A549 (cell line): ENCODE measurements at regions of chr17 and their contacts with region 1.

Region 1: DNA sequence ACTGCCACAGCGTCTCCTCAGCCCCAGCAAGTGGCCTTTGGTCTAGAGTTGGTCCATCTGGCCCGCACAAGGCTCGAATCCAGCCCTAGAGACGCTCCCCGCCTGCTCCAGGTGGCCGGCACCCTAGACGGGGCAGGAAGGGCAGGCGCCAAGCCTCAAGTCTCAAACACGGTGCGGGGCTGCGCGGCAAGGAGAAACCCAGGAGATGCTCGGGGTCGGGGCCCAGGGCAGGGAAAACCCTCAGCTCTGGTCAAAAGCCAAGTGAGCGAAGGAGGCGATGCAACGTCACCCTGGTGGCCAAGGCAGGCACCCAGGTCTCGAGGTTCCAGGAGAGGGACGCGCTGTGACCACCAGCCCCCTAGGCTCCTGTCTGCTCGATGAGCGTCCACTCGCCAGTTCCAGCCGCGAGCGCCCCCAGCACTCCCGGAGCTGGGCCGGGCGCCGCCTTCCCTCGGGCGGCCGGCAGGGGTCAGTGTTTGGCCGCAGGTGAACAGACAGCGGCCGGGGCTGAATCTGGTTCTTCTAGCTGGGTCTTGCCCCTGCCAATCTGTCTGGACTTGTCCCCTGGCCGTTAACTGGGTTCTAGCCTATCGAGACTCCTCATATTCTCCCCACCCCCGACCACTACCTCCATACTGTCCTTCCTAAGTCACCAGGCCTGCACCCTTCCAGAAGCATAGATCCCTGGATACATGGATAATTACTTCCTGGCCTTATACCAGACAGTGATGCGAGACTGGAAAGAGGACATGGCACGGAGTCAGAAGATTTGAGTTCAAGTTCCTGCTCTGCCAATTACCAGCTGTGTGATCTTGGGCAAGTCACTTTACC is 44.0 kb downstream of the PRAC1 start:
- DNase-seq: peak; percentile 74 to 86
- ATAC-seq: peak; percentile 96 to 98
- H3K4me3 ChIP-seq: peak overlapping the region; percentile 3; the same call in 1 of the 3 replicates
- H3K27ac ChIP-seq: peak overlapping the region; percentile 28 to 78
- H3K4me1 ChIP-seq: peaks cover 8% of the 10 kb centered on the region; the same call in 1 of the 3 replicates
- CTCF ChIP-seq: peak; percentile 99
- EP300 ChIP-seq: no peak
- POLR2A ChIP-seq: no peak
- RAD21 ChIP-seq: peak; percentile 91 to 97

Region 2: GRCh38 chr17:48478224-48479013 is 199.9 kb before region 1 on chr17:
- CTCF ChIA-PET with region 1: no interaction called
- POLR2A ChIA-PET with region 1: no interaction called
- DNase-seq: no peak
- ATAC-seq: peak; percentile 54 to 66; a peak in 4 of 6 replicates
- H3K4me3 ChIP-seq: no peak overlapping the region
- H3K27ac ChIP-seq: no peak overlapping the region
- H3K4me1 ChIP-seq: peaks cover 4% of the 10 kb centered on the region
- CTCF ChIP-seq: no peak
- EP300 ChIP-seq: no peak
- POLR2A ChIP-seq: no peak
- RAD21 ChIP-seq: no peak

Region 3: DNA sequence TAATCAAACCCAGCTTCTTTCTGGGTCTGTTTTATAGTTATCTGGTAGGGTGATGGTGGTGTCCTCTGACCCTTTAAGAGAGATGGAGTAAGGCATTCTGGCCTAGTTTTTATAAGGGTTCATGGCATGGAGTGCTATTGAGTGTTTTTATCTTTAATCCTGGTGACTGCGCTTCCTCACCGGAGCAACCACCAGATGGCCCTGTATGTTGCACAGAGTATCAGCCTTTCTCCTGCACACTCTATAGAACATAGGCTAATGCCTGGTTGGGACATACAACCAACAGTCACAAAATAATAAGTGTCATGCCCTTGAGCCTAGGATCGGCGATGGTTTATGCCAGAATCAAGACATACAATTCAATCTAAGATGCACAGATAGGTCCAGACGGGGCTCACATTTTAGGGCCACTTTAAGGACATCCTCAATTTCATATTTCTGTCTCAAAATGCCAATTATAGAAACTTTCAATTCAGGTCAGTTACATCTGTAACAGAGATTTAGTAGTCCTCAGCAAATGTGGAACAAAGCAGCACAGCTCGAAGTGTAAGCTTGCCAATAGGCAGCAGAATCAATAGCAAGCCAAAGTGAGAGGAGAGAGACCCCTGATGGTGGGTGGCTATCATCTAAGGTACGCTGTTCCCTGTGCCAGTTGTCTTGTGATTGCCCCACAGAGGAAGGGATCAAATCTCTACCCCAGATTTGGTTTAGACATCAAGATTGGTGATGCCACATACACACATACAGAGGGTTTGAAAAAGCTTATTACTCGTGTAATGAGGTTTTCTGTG is 15.0 kb before region 1 on chr17:
- CTCF ChIA-PET with region 1: interaction called, 121 read pairs
- POLR2A ChIA-PET with region 1: interaction called, 3 read pairs
- DNase-seq: no peak
- ATAC-seq: peak; percentile 73 to 83
- H3K4me3 ChIP-seq: no peak overlapping the region
- H3K27ac ChIP-seq: no peak overlapping the region
- H3K4me1 ChIP-seq: no peaks in the 10 kb centered on the region
- CTCF ChIP-seq: no peak
- EP300 ChIP-seq: no peak
- POLR2A ChIP-seq: no peak
- RAD21 ChIP-seq: 0 out of 5 replicates have a peak, but pooled peaks of 1 of the 2 experiments have one; percentile 11

Region 4: DNA sequence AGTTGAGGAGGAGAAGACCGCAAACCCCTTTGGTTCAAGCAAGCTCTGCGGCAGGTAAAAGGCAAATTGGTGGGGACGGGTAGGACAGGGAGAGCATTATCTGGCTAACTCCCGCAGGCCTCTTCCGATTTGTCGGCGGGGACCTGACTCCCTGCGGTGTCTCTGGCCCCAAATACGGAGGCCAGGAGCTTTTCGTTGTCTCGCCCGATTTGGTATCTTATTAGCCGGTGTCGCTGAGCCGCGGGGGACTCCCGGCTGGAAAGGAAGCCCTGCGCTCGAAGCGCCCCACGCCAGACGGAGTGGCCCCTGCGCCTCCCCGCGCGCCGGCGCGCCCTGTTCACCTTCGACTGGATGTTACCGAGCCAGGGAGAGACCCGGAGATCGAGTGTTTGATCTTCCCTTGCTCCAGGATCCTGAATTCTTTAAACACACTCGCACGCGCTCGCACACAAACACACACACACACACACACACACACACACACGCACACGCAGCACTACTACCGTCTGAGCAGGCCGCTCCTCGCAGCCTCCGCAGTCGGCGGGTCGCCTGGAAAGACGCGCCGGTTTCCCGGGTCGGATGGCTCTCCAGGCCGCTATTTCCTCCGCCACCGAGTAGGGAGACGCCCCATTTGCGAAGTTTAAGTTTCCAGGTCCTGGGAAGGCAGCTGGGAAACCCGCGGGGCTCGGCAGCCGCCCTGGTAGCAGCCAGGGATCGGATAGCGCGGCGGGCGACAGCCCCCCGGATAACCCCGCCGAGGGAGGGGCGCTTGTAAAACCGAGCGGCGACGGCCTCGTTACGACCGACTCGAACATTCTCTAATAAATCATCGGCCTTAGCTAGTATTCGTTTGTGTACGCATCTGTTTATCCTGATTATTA is 40.6 kb after region 1 on chr17:
- CTCF ChIA-PET with region 1: interaction called, 204 read pairs
- POLR2A ChIA-PET with region 1: interaction called, 3 read pairs
- DNase-seq: no peak
- ATAC-seq: no peak
- H3K4me3 ChIP-seq: no peak overlapping the region
- H3K27ac ChIP-seq: no peak overlapping the region
- H3K4me1 ChIP-seq: peaks cover 10% of the 10 kb centered on the region; the same call in 2 of the 3 replicates
- CTCF ChIP-seq: no peak
- EP300 ChIP-seq: no peak
- POLR2A ChIP-seq: no peak
- RAD21 ChIP-seq: no peak

Region 5: DNA sequence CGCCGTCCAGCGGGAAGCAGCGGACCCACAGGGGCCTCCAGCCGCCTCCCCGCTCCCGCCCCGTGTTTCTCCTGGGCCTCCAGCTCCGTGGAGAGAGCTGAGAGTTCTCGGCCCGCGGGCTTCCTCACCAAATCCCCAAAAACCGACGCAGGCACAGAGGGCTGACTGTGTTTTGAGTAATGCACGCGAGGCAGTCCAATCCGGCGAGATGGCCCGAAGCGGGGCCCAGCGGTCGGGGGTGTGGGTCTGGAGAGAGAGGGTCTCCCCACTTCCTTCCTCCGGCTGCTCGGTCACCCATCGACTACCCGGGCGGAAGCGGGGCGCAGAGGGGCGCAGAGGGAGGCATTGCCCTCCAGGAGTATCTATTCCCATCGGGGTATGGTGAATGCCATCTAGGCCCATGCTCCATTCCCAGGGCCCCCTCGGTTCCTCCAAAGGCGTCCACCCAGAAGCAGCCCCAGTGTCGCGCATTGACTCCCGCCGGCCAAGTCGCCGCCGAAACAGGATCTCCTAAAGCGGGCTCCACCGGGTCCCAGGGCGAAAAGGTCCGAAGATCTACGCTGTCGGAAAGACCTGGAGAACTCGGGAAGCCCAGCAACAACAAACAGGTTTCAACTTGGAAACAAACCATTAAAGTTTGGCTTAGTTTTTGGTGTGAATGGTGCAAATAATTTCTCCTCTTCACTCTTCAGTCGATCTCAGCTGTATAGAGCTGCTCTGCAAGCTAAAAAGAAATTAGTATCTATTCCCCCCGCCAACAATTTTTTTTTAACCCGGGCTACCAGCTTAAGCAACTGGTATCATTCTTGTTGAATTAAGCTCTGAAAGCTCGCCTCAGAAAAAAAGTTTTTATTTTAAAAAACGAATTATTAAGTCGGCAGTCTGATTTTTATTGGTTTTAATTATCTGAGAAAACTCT is 69.3 kb after region 1 on chr17:
- CTCF ChIA-PET with region 1: interaction called, 13 read pairs
- POLR2A ChIA-PET with region 1: no interaction called
- DNase-seq: no peak
- ATAC-seq: no peak
- H3K4me3 ChIP-seq: no peak overlapping the region
- H3K27ac ChIP-seq: no peak overlapping the region
- H3K4me1 ChIP-seq: peaks cover 17% of the 10 kb centered on the region; the same call in 2 of the 3 replicates
- CTCF ChIP-seq: no peak
- EP300 ChIP-seq: no peak
- POLR2A ChIP-seq: no peak
- RAD21 ChIP-seq: no peak

Region 6: DNA sequence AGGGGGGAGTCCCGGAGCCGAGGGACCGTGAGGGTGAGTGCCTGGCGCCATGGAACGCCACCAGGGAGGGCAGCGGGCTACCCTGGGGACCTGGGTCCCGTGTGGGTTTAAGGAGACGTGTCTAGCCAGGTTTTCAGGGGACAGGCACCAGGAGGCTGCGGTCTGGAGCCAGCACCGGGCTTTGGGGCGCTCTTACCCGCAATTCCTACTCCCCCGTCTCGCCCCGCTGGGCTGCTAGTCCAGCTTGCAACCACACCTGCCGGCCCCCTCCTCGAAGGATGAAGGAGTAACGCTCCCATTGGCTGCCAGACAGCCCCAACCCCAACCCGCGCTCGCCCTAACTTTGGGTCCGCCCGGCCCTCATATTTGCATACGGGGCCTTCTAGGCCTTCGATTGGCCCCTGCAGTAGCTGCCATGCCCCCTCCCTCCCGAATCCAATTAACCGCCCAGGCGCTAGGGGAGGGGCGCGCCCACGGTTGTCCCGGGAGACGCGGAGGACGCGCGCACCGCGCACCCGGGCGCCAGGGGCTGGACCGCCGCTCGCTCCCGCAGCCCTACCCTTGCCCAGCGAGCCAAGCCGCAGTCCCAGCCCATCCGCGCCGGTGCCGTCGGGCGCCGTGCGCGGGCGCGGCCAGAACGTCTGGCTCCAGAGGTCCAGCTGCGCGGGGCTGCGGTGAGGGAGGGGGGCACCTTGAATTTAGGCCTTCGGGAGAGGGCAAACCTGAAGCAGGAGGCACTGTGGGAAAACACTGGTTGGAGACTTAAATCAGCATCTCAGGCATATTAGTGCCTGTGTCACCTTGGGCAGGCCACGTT is 138.6 kb after region 1 on chr17 and contains the start of gene TTLL6:
- CTCF ChIA-PET with region 1: interaction called, 41 read pairs
- POLR2A ChIA-PET with region 1: no interaction called
- DNase-seq: peak; percentile 90 to 97
- ATAC-seq: peak; percentile 95 to 97
- H3K4me3 ChIP-seq: peak within 1 kb of the TSS; percentile 54
- H3K27ac ChIP-seq: peak within 1 kb of the TSS; percentile 56 to 76
- H3K4me1 ChIP-seq: peaks cover 23% of the 10 kb centered on the region; the same call in 2 of the 3 replicates
- CTCF ChIP-seq: no peak
- EP300 ChIP-seq: no peak
- POLR2A ChIP-seq: no peak; the same call in 1 of the 2 replicates
- RAD21 ChIP-seq: no peak
- polyA plus RNA-seq, gene TTLL6: 7.8 and 8.9 TPM in 2 replicates

Region 7: DNA sequence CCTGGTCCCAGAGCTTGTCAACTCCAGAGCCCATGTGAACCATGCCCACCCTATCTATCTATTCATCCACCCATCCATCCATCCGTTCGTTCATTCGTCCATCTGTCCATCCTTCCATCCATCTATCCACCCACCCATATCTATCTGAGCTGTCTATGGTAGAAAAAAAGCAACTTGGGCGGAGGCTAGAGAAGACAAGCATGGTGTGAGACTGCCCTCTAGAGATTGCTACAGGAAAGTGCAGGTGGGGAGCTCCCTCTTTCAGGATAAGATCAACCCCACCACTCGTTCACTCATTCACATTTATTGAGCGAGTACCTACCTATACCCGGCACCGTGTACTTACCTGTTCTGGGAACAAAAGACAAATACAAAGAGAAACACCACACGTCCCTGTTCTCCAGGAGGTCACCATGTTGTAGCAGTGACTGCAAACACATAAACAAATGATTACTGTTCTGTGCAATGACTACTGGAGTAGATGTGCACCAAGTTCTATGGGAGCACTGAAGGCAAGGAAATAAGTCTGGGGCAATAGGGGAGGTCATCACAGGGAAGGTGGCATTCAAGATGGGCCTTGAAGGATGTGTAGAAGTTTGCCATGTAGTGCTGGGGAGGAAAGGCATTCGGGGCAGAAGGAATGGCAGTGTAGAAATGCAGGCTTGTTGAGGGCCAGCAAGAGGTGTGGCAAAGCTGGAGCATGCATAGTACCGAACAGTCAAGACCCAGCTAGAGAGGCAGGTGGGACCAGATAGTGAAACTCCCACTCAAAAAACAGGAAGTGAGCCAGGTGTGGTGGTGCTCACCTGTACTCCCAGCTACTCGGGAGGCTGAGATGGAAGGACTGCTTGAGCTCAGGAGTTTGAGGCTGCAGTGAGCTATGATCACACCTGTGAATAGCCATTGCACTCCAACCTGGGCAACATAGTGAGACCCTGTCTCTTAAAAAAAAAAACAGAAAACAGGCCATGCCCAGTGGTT is 200.9 kb after region 1 on chr17:
- CTCF ChIA-PET with region 1: interaction called, 368 read pairs
- POLR2A ChIA-PET with region 1: interaction called, 5 read pairs
- DNase-seq: peak; percentile 85 to 94
- ATAC-seq: peak; percentile 86 to 88
- H3K4me3 ChIP-seq: no peak overlapping the region
- H3K27ac ChIP-seq: no peak overlapping the region
- H3K4me1 ChIP-seq: peaks cover 15% of the 10 kb centered on the region
- CTCF ChIP-seq: peak; percentile 99
- EP300 ChIP-seq: no peak
- POLR2A ChIP-seq: no peak
- RAD21 ChIP-seq: peak; percentile 99 to 100